Activated CD8-positive, alpha-beta memory T cell treated with anti-CD3 and anti-CD28 coated beads, Interleukin-2, amount 10 ng/mL, durations not matched to agents 7 days and 5 days (primary cell): ENCODE measurements at regions of chr20 and their contacts with region 1.

Region 1: DNA sequence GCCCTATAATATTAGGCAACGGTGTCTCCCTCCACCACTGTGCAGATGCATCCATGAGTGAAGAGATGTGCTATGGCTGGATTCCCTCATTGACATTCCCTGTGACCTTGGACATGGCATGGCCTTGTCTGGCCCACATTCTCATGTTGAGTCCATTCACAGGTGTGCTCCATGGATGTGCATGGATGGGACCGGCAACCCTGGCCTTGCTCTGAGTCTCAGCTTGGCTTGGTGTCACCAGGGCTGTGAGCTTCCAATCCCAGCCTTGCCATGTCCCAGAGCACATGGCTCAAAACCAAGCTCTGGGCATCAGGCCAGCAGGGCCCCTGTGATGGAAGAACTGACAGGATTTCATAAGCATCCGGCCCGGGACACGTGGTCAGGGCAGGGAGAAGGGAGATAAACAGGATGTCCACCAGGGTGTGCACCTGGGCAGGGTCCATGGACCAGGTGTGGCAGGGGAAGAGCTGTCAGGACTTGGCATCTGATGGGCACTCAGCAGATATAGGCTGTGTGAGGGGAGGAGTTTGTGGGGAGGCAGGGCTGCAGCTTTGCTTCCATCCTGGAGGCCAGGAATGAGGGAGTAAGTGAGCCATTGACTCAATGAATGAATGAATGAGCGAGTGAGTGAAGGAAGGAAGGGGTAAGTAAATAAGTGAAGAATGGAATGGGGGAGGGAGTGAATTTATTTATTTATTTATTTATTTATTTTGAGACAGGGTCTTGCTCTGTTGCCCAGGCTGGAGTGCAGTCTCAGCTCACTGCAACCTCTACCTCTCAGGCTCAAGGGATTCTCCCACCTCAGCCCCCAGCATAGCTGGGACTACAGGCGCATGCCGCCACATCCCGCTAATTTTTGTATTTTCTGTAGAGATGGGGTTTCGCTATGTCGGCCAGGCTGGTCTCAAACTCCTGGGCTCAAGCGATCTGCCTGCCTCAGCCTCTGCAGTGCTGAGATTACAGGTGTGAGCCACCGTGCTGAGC is 15.7 kb downstream of the NRSN2 start:
- DNase-seq: peak; percentile 75
- ATAC-seq: peak; percentile 65
- H3K4me3 Mint-ChIP-seq: no peak overlapping the region
- H3K27ac Mint-ChIP-seq: peak overlapping the region; percentile 54
- H3K4me1 Mint-ChIP-seq: peaks cover 38% of the 10 kb centered on the region
- H3K27me3 Mint-ChIP-seq: peaks cover 9% of the 10 kb centered on the region

Region 2: GRCh38 chr20:380763-381580 is 18.4 kb after region 1 on chr20:
- CTCF ChIA-PET with region 1: interaction called, 12 read pairs
- DNase-seq: peak; percentile 77
- ATAC-seq: peak; percentile 61
- H3K4me3 Mint-ChIP-seq: peak overlapping the region; percentile 78
- H3K27ac Mint-ChIP-seq: peak overlapping the region; percentile 88
- H3K4me1 Mint-ChIP-seq: peaks cover 18% of the 10 kb centered on the region
- H3K27me3 Mint-ChIP-seq: no peaks in the 10 kb centered on the region

Region 3: GRCh38 chr20:478949-479429 is 116.4 kb after region 1 on chr20:
- CTCF ChIA-PET with region 1: interaction called, 64 read pairs
- DNase-seq: no peak
- ATAC-seq: peak; percentile 81
- H3K4me3 Mint-ChIP-seq: no peak overlapping the region
- H3K27ac Mint-ChIP-seq: peak overlapping the region; percentile 10
- H3K4me1 Mint-ChIP-seq: peaks cover 9% of the 10 kb centered on the region
- H3K27me3 Mint-ChIP-seq: no peaks in the 10 kb centered on the region

Region 4: GRCh38 chr20:539848-540247 is 177.3 kb after region 1 on chr20:
- CTCF ChIA-PET with region 1: no interaction called
- DNase-seq: no peak
- ATAC-seq: no peak
- H3K4me3 Mint-ChIP-seq: no peak overlapping the region
- H3K27ac Mint-ChIP-seq: no peak overlapping the region
- H3K4me1 Mint-ChIP-seq: peaks cover 71% of the 10 kb centered on the region
- H3K27me3 Mint-ChIP-seq: no peaks in the 10 kb centered on the region